ENCODE measurements at regions of chr16 and their contacts with region 1.

Region 1: GRCh38 chr16:12089492-12090150 is 113.1 kb downstream of the SNX29 start:
- DNase-seq: peak; percentile 45 to 73 (median 63)
- ATAC-seq: peak; percentile 67 to 84
- H3K4me3 ChIP-seq: peak overlapping the region; percentile 2
- H3K27ac ChIP-seq: no peak overlapping the region
- H3K4me1 ChIP-seq: peaks cover 9% of the 10 kb centered on the region
- H3K27me3 ChIP-seq: no peaks in the 10 kb centered on the region

Region 2: GRCh38 chr16:11871193-11871592 is 218.4 kb before region 1 on chr16:
- intact Hi-C with region 1: no loop called
- DNase-seq: no peak
- ATAC-seq: peak; percentile 39 to 45
- H3K4me3 ChIP-seq: no peak overlapping the region
- H3K27ac ChIP-seq: no peak overlapping the region
- H3K4me1 ChIP-seq: no peaks in the 10 kb centered on the region
- H3K27me3 ChIP-seq: no peaks in the 10 kb centered on the region

Region 3: DNA sequence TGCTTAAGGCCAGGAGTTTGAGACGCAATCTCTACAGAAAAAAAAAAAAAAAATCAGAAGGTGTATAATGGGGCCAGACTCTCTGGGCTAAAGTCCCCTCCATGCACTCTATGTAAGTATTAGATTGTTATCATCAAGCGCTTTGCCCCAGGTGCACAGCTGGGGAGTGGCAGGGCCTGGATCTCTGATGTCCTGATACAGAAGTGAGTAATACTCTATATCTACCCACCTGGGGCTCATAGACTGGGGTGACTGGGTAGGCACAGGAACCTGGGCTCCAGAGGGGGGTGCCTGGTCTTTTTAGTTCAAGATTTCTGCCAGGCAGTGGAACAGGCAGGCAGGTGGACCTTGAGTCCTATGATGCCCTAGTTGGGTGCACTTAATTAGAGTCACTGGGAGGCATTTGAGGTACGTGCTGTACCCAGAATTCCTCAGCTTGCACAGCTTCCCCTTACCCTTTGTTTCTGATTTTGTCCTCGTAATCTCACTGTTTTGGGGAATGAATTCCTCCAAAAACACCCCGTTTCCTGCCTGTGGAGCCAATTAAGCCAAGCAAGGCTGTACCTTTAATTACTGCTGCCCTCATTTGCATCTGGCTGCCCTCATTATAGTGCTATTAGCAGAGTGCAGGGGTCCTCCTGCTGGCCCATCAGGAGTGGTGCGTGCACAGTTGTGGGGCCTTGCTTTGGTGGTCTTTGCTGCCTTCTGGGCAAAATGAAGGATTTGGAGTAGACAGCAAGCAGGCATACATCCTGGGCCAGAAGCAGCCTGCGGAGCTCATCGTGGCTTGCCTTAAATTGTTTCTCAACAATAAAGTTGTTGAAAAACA is 125.9 kb after region 1 on chr16:
- intact Hi-C with region 1: loop called in 3 of 4 experiments (anchors 5 to 10 kb)
- DNase-seq: no peak
- ATAC-seq: peak in 1 of 2 donors; percentile 46
- H3K4me3 ChIP-seq: no peak overlapping the region
- H3K27ac ChIP-seq: no peak overlapping the region
- H3K4me1 ChIP-seq: no peaks in the 10 kb centered on the region
- H3K27me3 ChIP-seq: no peaks in the 10 kb centered on the region